Activated CD8-positive, alpha-beta memory T cell treated with anti-CD3 and anti-CD28 coated beads, Interleukin-2, amount 10 ng/mL, durations not matched to agents 7 days and 5 days (primary cell): ENCODE measurements at regions of chr11 and their contacts with region 1.

Region 1: DNA sequence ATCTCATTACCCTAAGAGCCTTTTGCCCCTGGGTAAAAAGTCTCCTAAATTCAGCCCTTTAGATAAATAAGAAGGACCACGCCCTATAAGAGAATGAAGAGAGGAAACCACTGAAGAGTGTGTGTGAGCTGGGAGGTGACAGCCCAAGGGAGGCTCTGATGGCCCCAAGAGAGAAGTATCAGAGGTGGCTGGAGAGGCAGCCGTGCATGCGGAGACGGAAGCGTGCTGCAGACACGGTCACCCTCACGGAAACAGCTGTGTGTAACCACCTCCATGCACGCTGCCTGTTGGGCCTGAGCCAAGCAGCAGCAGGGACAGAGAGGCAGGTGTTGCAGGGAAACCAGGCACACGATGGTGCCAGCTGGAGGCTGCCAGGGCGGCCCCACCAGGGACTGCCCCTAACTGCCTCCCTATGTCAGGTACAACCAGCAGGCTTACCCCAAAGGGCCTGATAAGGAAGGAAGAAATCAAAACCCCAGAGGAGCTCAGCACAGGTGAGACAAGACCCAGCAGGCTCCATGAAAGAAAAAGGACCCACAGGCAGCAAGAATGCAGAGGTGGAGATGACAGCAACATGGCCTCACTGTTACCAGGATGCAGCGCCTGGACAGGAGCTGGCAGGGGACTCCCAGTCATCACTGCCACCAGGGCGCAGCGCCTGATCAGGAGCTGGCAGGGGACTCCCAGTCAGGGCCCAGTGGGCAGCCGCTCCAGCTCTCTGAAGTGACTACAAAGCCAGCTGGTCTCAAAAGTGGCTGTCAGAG is 7.8 kb downstream of the LARGE2 start:
- DNase-seq: peak; percentile 81
- ATAC-seq: peak; percentile 87
- H3K4me3 Mint-ChIP-seq: peak overlapping the region; percentile 43
- H3K27ac Mint-ChIP-seq: peak overlapping the region; percentile 90
- H3K4me1 Mint-ChIP-seq: peaks cover 31% of the 10 kb centered on the region
- H3K27me3 Mint-ChIP-seq: no peaks in the 10 kb centered on the region

Region 2: DNA sequence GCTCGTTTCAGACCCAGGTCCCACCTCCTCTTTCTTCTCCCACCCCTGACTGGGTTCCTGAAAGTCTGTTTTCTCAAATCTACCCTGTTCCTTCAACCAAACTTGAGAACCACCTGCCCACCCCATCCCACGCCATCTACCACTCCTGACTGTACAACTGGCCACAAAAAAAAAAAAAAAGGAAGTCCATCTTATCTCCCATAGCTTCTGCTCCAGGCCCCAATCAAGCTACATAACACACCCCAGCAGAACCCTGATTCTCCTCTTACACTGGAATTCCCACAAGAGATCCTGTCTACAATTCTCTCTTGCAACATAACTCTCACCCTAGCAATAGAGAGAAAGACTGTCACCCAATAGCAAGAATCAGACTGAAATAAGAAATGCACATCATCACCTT is 225.6 kb before region 1 on chr11:
- CTCF ChIA-PET with region 1: no interaction called
- DNase-seq: no peak
- ATAC-seq: no peak
- H3K4me3 Mint-ChIP-seq: no peak overlapping the region
- H3K27ac Mint-ChIP-seq: no peak overlapping the region
- H3K4me1 Mint-ChIP-seq: peaks cover 4% of the 10 kb centered on the region
- H3K27me3 Mint-ChIP-seq: peaks cover 63% of the 10 kb centered on the region

Region 3: DNA sequence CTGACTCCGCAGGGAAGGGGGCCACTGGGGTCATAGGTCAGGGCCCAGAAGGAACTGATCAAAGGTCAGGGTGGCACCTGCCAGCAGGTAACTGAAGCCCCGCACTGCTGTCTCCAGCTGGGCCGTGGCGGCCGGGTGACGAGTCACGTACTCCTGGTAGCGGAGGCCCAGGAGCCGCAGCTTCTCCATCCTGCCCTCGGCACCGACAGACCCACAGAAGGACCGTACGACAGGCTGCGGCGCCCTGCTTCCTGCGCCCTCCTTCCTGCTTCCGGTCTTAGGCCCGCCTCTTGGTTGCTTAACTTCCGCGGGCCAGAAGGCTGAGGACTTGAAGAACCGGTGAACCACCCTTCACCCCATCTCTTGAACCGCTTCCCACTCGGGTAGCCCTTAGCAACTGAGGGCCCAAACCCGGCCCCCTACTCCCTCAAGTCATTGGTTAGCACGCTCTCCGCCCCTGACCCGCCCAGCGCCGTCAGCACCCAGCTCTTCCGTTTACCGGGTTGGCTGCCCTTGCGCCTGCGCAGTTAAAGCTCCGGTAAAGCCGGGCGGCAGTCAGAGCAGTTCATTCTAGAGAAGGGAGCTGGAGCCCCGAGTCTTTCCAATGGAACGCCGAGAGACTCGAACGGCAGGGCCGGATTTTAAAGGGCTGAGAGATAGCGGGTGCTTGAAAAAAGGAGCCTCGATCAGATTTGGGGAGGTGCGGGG is 12.4 kb before region 1 on chr11 and contains the start of gene PEX16:
- CTCF ChIA-PET with region 1: interaction called, 11 read pairs
- DNase-seq: peak; percentile 98
- ATAC-seq: peak; percentile 91
- H3K4me3 Mint-ChIP-seq: peak within 1 kb of the TSS; percentile 92
- H3K27ac Mint-ChIP-seq: peak within 1 kb of the TSS; percentile 94
- H3K4me1 Mint-ChIP-seq: peaks cover 39% of the 10 kb centered on the region
- H3K27me3 Mint-ChIP-seq: peaks cover 6% of the 10 kb centered on the region
- total RNA-seq, gene PEX16: 45.9 to 53.9 TPM

Region 4: GRCh38 chr11:45993531-45994001 is 63.4 kb after region 1 on chr11:
- CTCF ChIA-PET with region 1: no interaction called
- DNase-seq: no peak
- ATAC-seq: no peak
- H3K4me3 Mint-ChIP-seq: no peak overlapping the region
- H3K27ac Mint-ChIP-seq: no peak overlapping the region
- H3K4me1 Mint-ChIP-seq: no peaks in the 10 kb centered on the region
- H3K27me3 Mint-ChIP-seq: no peaks in the 10 kb centered on the region